KBM-7 (cell line): ENCODE measurements at regions of chr17 and their contacts with region 1.

Region 1: GRCh38 chr17:76278952-76279741 is 14.0 kb downstream of the UBALD2 start:
- DNase-seq: peak; percentile 81

Region 2: DNA sequence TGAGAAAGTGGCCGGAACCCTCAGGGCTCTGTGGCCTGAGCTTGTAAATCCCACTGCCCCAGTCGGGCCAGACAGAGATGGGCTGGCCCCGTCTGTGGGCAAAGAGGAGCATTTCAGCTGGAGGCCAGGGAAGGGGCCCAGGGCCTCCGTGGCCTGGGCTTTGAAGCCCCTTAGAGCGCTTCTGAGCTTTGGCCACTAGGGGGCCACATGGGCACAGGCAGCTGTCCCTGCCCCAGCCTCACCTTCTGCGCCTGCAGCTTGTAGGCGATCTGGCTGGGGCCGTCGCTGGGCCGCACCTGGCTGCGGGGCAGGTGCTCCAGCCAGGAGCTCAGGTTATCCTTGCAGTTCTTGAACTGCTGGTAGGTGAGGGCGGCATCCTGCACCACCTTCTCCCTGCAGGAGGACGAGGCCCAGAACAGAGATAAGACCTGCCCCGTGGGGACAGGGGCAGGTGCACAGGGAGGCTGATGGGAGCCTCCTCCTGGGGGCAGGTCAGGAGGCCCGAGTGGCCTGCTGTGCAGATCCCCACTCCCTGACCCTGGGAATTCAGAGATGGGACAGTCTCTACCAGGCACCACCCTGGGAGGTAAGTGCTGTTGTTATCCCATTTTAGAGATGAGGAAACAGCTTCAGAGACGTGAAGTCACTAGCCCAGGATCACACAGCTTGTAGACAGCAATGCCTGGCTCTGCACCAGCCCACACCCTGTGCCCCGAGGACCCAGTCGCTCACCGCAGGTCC is 264.8 kb before region 1 on chr17:
- in situ Hi-C with region 1: loop called (anchors 25 kb)
- DNase-seq: peak; percentile 81

Region 3: GRCh38 chr17:76121932-76122430 is 157.2 kb before region 1 on chr17:
- in situ Hi-C with region 1: loop called (anchors 10 kb)
- DNase-seq: no peak